ENCODE measurements at regions of chr7 and their contacts with region 1.

Region 1: GRCh38 chr7:130050773-130051125 is 425 bp downstream of the ZC3HC1 start:
- DNase-seq: no peak
- ATAC-seq: no peak
- H3K4me3 ChIP-seq: peak overlapping the region; percentile 86
- H3K4me3 Mint-ChIP-seq: peak overlapping the region; percentile 94 to 99 (median 98)
- H3K27ac ChIP-seq: peak overlapping the region; percentile 78
- H3K27ac Mint-ChIP-seq: peak overlapping the region; percentile 90 to 99 (median 95)
- H3K4me1 ChIP-seq: peaks cover 5 to 8% of the 10 kb centered on the region in 2 donors
- H3K4me1 Mint-ChIP-seq: peaks cover 6 to 29% (median 14%) of the 10 kb centered on the region in 7 donors
- H3K27me3 ChIP-seq: no peaks in the 10 kb centered on the region
- H3K27me3 Mint-ChIP-seq: peaks cover 0 to 3% (median 0%) of the 10 kb centered on the region in 5 donors

Region 2: DNA sequence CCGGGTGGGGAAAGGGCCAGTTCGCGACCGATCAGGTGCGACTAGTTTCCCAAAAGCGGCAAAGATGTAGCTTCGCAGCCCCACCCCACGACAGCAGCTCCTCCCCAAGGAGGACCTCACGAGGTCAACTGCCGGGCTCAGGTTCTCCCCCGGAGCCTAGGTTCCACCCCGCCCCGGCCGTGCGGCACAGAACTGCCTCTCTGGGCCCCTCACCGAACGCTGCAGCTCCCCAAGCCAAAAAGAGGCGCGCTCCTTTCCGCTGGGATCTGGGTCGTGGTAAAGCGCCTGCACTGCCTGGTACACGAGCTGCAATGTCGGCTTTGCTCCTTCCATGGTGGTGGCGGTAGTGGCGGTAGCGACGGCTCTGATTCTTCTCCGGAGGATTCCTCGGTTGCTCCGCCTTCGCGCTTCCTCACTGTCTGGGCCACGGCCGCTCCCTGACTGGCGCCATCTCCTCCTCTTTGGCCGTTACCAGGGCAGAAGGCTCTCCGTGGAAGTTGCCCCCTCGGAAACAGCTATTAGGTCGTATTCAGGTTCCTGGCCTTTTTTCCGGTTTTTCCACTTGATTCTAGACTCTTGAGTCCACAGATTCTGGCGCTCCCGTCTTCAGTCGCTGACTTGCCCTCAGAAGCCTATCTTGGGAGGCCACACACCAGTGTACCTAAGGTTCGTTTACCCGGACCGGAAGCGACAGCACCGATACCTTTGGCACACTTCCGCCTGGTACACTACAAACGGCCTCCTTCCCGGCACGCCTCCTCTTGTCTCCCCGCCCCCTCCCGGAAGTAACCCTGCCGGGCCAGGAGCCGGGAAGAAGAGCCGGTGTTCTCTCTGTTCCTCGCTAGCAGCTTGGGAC is 996.1 kb before region 1 on chr7 and contains the start of gene TNPO3:
- CTCF ChIA-PET with region 1: no interaction called
- POLR2A ChIA-PET with region 1: no interaction called
- intact Hi-C with region 1: loop called in 1 of 2 experiments (anchors 2 kb)
- DNase-seq: peak; percentile 76 to 90 (median 85)
- ATAC-seq: peak; percentile 92
- H3K4me3 ChIP-seq: peak within 1 kb of the TSS; percentile 96
- H3K4me3 Mint-ChIP-seq: peak within 1 kb of the TSS; percentile 91 to 99 (median 99)
- H3K27ac ChIP-seq: peak within 1 kb of the TSS; percentile 92
- H3K27ac Mint-ChIP-seq: peak within 1 kb of the TSS; percentile 96 to 100 (median 99)
- H3K4me1 ChIP-seq: peaks cover 15 to 18% of the 10 kb centered on the region in 2 donors
- H3K4me1 Mint-ChIP-seq: peaks cover 17 to 51% (median 39%) of the 10 kb centered on the region in 7 donors
- H3K27me3 ChIP-seq: peaks cover 0 to 3% of the 10 kb centered on the region in 2 donors
- H3K27me3 Mint-ChIP-seq: peaks cover 4 to 13% (median 4%) of the 10 kb centered on the region in 5 donors
- total RNA-seq, gene TNPO3: 28.6 to 40.6 (median 39.6) TPM

Region 3: GRCh38 chr7:130037703-130038102 is 13.0 kb before region 1 on chr7:
- CTCF ChIA-PET with region 1: no interaction called
- POLR2A ChIA-PET with region 1: interaction called, 11 read pairs
- intact Hi-C with region 1: no loop called
- DNase-seq: no peak
- ATAC-seq: no peak
- H3K4me3 ChIP-seq: no peak overlapping the region
- H3K4me3 Mint-ChIP-seq: no peak overlapping the region
- H3K27ac ChIP-seq: no peak overlapping the region
- H3K27ac Mint-ChIP-seq: no peak overlapping the region
- H3K4me1 ChIP-seq: no peaks in the 10 kb centered on the region
- H3K4me1 Mint-ChIP-seq: peaks cover 0 to 6% (median 0%) of the 10 kb centered on the region in 7 donors
- H3K27me3 ChIP-seq: no peaks in the 10 kb centered on the region
- H3K27me3 Mint-ChIP-seq: no peaks in the 10 kb centered on the region

Region 4: DNA sequence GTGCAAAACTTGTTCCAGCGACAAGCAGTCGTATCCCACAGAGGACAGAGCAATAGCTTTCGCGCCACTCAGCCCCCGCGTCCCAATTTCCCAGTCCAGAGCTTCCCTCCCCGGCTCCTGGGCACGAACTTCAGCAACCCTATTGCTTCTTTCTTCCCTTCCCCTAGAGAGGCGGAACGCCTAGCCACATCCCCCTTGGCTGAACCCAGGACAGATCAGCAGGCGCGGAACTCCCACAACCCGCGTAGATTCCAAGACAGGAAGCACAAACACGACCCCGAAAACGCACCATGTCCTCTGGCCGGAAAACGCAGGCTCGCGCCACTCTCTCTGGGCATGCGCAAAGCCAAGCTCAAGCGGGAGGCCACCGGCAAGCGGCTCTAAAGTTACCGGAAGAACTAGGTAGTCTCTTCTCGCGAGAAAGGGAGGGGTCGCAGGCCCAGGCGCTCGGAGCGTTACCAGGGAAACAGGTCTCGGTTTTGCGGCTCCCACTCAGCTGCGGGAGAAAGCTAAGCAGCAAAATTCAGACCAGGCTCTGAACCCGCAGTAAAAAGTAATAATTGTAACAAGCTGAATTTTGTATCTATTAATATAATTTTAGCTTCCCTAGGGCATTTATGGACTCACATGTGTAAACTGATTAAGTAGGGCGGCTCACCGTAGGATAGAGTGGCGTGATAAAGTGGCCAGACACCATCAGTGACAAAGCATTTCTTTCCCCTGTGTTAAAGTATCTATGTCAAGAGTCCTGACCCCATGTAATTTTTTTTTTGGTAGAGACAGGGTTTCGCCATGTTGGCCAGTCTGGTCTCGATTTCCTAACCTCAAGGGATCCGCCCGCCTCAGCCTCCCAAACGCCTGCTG is 154.6 kb after region 1 on chr7 and contains the start of gene TMEM209:
- CTCF ChIA-PET with region 1: no interaction called
- POLR2A ChIA-PET with region 1: interaction called, 4 read pairs
- intact Hi-C with region 1: loop called in 1 of 2 experiments (anchors 2 kb)
- DNase-seq: peak; percentile 80 to 96 (median 93)
- ATAC-seq: peak; percentile 98
- H3K4me3 ChIP-seq: peak within 1 kb of the TSS; percentile 89
- H3K4me3 Mint-ChIP-seq: peak within 1 kb of the TSS; percentile 98 to 100 (median 100)
- H3K27ac ChIP-seq: peak within 1 kb of the TSS; percentile 83
- H3K27ac Mint-ChIP-seq: peak within 1 kb of the TSS; percentile 97 to 100 (median 99)
- H3K4me1 ChIP-seq: peaks cover 11 to 14% of the 10 kb centered on the region in 2 donors
- H3K4me1 Mint-ChIP-seq: peaks cover 13 to 43% (median 37%) of the 10 kb centered on the region in 7 donors
- H3K27me3 ChIP-seq: no peaks in the 10 kb centered on the region
- H3K27me3 Mint-ChIP-seq: peaks cover 0 to 9% (median 0%) of the 10 kb centered on the region in 5 donors
- total RNA-seq, gene TMEM209: 18.8 to 37.3 (median 35.1) TPM